H1 (cell line): ENCODE measurements at regions of chr4 and their contacts with region 1.

Region 1: DNA sequence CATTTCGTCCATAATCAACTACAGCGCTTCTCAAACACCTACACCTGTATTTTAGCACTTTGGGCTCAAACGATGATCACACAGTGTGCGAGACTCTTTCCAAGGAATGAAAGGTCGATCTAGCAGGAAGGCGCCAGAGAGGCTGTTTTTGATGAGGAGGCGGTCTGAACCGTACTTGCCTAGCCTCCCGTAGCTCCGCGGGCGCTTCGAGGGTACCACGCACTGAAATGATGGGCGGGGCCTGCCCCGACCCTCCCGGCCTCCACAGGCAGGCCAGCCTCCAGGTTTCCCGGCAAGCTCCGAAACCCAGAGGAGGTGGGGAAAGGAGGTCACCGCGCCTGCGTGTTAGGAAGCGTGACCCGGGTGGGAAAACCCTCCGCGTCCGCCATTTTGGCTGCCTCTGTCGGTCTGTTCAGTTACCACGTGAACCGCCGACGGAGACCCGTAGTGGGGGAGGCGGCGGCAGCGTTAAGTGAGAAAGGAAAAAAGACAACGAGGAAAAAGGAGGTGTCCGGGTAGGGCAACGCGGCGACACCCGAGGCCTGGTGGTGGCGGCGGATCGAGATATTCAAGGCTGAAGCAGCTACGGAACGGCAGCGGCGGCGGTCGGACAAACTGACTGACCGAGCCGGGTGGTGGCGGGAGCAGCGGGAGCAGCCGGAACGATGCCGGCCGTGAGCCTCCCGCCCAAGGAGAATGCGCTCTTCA is at the start of gene NAA15:
- DNase-seq: peak; percentile 95 to 96
- H3K4me3 ChIP-seq: peak within 1 kb of the TSS; percentile 91 to 100 (median 93)
- H3K27ac ChIP-seq: peak within 1 kb of the TSS; percentile 83
- H3K4me1 ChIP-seq: peaks cover 0 to 2% (median 0%) of the 10 kb centered on the region in 4 experiments; a peak in 1 of 7 replicates
- H3K27me3 ChIP-seq: no peaks in the 10 kb centered on the region
- CTCF ChIP-seq: no peak
- EP300 ChIP-seq: no peak; a peak in 1 of 3 replicates
- POLR2A ChIP-seq: no peak; a peak in 1 of 3 replicates
- RAD21 ChIP-seq: peak in 1 of 2 experiments; percentile 10; a peak in 2 of 4 replicates
- total RNA-seq, gene NAA15: 119 and 124 TPM in 2 replicates

Region 2: GRCh38 chr4:139153420-139154133 is 147.7 kb before region 1 on chr4:
- CTCF ChIA-PET with region 1: interaction called, 3 read pairs
- POLR2A ChIA-PET with region 1: interaction called, 14 read pairs
- DNase-seq: no peak
- H3K4me3 ChIP-seq: peak overlapping the region in 1 of 4 experiments; percentile 21; a peak in 1 of 8 replicates
- H3K27ac ChIP-seq: peak overlapping the region; percentile 78; the same call in 1 of the 2 replicates
- H3K4me1 ChIP-seq: peaks cover 8 to 19% (median 19%) of the 10 kb centered on the region in 4 experiments
- H3K27me3 ChIP-seq: no peaks in the 10 kb centered on the region
- CTCF ChIP-seq: no peak
- EP300 ChIP-seq: peak in 1 of 2 experiments; percentile 73; a peak in 1 of 3 replicates
- POLR2A ChIP-seq: peak in 1 of 2 experiments; percentile 22; a peak in 1 of 3 replicates
- RAD21 ChIP-seq: no peak

Region 3: GRCh38 chr4:139286186-139286698 is 15.0 kb before region 1 on chr4:
- CTCF ChIA-PET with region 1: interaction called, 34 read pairs
- POLR2A ChIA-PET with region 1: interaction called, 11 read pairs
- DNase-seq: no peak
- H3K4me3 ChIP-seq: no peak overlapping the region
- H3K27ac ChIP-seq: no peak overlapping the region
- H3K4me1 ChIP-seq: no peaks in the 10 kb centered on the region
- H3K27me3 ChIP-seq: no peaks in the 10 kb centered on the region
- CTCF ChIP-seq: no peak
- EP300 ChIP-seq: no peak
- POLR2A ChIP-seq: no peak
- RAD21 ChIP-seq: no peak

Region 4: DNA sequence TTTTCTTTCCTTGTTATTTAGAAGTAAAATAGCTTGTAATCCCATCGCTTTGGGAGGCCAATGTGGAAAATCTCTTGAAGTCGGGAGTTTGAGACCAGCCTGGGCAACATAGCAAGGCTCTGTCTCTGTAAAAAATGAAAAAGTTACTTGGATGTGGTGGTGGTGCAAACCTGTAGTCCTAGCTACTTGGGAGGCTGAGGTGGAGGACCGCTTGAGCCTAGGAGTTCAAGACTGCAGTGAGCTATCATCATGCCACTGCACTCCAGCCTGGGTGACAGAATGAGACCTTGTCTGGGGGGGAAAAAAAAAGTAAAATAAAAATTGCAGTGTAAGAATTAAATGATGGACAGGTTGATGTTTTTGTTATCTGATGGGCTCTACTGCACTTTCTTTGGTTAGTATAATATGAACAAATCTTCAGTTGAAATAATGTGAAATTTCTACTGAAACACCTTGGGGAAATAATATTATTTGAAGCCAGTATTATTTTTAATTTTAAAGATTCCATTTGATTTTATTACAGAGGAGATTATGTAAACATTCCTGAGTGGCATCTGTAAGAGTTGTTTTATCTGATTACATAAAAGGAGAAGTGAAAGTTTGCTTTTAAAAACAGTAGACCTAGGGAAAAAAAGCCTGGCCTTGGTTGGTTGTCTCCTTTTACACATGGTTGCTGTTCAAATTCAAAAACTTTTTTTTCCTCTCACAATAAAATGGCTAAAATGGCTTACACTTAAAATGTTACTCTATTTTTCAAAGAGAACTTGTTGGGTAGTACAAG is 11.5 kb after region 1 on chr4:
- CTCF ChIA-PET with region 1: interaction called, 4 read pairs
- POLR2A ChIA-PET with region 1: interaction called, 28 read pairs
- DNase-seq: no peak
- H3K4me3 ChIP-seq: no peak overlapping the region
- H3K27ac ChIP-seq: no peak overlapping the region
- H3K4me1 ChIP-seq: peaks cover 5 to 10% (median 5%) of the 10 kb centered on the region in 4 experiments
- H3K27me3 ChIP-seq: no peaks in the 10 kb centered on the region
- CTCF ChIP-seq: no peak
- EP300 ChIP-seq: no peak
- POLR2A ChIP-seq: no peak
- RAD21 ChIP-seq: no peak